MCF 10A (cell line): ENCODE measurements at regions of chr11 and their contacts with region 1.

Region 1: DNA sequence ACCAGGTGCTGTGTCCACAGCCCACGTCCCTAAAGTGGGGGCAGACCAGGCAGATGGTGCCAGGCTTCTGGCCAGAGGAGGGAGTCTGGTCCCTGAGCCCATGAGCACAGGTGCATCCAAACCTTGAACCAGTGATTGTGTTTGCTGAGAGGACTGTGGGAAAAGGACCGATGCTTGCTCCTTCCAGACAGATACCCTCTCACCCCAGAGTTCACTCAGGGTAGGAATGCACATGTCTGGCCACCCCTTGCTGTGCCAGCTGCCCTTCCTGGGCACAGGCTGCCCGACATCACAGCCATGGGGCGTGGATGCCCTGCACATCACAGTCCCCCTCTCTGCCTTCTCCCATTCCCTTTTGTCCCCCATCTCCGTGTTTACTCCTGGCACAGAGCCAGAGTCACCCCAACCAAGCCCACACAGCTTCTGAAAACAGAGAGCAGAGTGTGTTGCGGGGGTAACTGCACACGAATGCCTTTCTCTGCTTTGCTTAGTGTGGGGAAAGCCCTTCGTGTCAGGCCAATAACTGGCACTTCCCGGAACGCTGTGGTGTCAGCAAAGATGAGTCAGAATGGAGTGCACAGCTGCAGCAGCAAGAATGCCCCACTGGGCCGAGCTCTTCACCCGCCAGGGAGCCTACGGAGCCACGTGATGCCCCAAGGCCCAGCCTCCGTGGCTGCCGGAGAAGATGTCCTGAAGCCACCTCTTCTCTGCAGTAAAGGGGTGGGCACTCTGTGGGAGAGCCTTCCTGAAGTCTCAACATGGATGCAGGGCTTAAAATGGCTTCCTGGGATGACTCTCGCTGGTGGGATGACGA is 7.6 kb downstream of the CARS1 start:
- DNase-seq: peak; percentile 91
- H3K4me3 Mint-ChIP-seq: peak overlapping the region; percentile 63
- H3K27ac Mint-ChIP-seq: peak overlapping the region; percentile 95
- H3K4me1 Mint-ChIP-seq: peaks cover 19% of the 10 kb centered on the region
- H3K27me3 Mint-ChIP-seq: no peaks in the 10 kb centered on the region
- CTCF ChIP-seq: peak; percentile 26

Region 2: GRCh38 chr11:3086114-3086513 is 36.5 kb after region 1 on chr11:
- CTCF ChIA-PET with region 1: interaction called, 54 read pairs
- POLR2A ChIA-PET with region 1: interaction called, 19 read pairs
- intact Hi-C with region 1: no loop called
- DNase-seq: no peak
- H3K4me3 Mint-ChIP-seq: no peak overlapping the region
- H3K27ac Mint-ChIP-seq: no peak overlapping the region
- H3K4me1 Mint-ChIP-seq: peaks cover 7% of the 10 kb centered on the region
- H3K27me3 Mint-ChIP-seq: peaks cover under 1% of the 10 kb centered on the region
- CTCF ChIP-seq: no peak

Region 3: GRCh38 chr11:3091791-3092602 is 42.4 kb after region 1 on chr11:
- CTCF ChIA-PET with region 1: interaction called, 54 read pairs
- POLR2A ChIA-PET with region 1: interaction called, 19 read pairs
- intact Hi-C with region 1: loop called (anchors 2 kb)
- DNase-seq: peak; percentile 83
- H3K4me3 Mint-ChIP-seq: no peak overlapping the region
- H3K27ac Mint-ChIP-seq: no peak overlapping the region
- H3K4me1 Mint-ChIP-seq: peaks cover 27% of the 10 kb centered on the region
- H3K27me3 Mint-ChIP-seq: no peaks in the 10 kb centered on the region
- CTCF ChIP-seq: peak; percentile 100